A673 (cell line): ENCODE measurements at regions of chr9 and their contacts with region 1.

Region 1: DNA sequence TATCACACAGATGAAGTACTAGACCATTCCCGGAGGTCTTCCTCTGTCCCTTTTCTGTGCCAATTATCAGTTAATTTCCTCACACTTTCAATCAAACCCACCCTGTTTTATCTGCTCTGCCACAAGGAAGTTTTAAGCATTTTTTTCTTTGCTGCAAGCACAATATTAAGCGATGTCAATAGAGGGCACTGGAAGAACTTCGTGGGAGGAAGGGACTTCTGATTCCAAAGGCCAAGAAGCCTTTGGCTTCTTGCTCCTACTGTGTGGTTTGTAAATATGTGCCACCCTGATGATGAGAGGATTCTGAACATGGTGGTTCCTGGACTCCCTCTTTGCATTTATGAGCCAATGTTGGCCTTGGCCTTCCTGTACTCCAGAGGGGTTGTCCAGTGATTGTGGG is 1712.5 kb upstream of the C9orf72 start:
- DNase-seq: peak; percentile 63
- H3K4me3 ChIP-seq: no peak overlapping the region
- H3K27ac ChIP-seq: no peak overlapping the region
- H3K4me1 ChIP-seq: peaks cover 15% of the 10 kb centered on the region
- H3K27me3 ChIP-seq: no peaks in the 10 kb centered on the region
- CTCF ChIP-seq: peak; percentile 56

Region 2: GRCh38 chr9:29203244-29203930 is 82.4 kb before region 1 on chr9:
- CTCF ChIA-PET with region 1: no interaction called
- POLR2A ChIA-PET with region 1: no interaction called
- intact Hi-C with region 1: no loop called
- DNase-seq: peak; percentile 71
- H3K4me3 ChIP-seq: no peak overlapping the region
- H3K27ac ChIP-seq: peak overlapping the region; percentile 26
- H3K4me1 ChIP-seq: peaks cover 66% of the 10 kb centered on the region
- H3K27me3 ChIP-seq: no peaks in the 10 kb centered on the region
- CTCF ChIP-seq: no peak

Region 3: GRCh38 chr9:29548436-29548835 is 262.6 kb after region 1 on chr9:
- CTCF ChIA-PET with region 1: no interaction called
- POLR2A ChIA-PET with region 1: no interaction called
- intact Hi-C with region 1: loop called (anchors 10 kb)
- DNase-seq: no peak
- H3K4me3 ChIP-seq: no peak overlapping the region
- H3K27ac ChIP-seq: no peak overlapping the region
- H3K4me1 ChIP-seq: no peaks in the 10 kb centered on the region
- H3K27me3 ChIP-seq: no peaks in the 10 kb centered on the region
- CTCF ChIP-seq: no peak